Posterior cingulate gyrus (tissue), 11 donors: ENCODE measurements at regions of chr12 and their contacts with region 1.

Region 1: GRCh38 chr12:52884526-52885293 is 20.2 kb downstream of the KRT8 start:
- DNase-seq: peak; percentile 50 to 95 (median 78)

Region 2: GRCh38 chr12:52575948-52576347 is 308.8 kb before region 1 on chr12:
- intact Hi-C with region 1: no loop called
- DNase-seq: no peak

Region 3: GRCh38 chr12:52980693-52981423 is 96.1 kb after region 1 on chr12:
- intact Hi-C with region 1: loop called (anchors 2 kb)
- DNase-seq: peak; percentile 69 to 97 (median 84)

Region 4: DNA sequence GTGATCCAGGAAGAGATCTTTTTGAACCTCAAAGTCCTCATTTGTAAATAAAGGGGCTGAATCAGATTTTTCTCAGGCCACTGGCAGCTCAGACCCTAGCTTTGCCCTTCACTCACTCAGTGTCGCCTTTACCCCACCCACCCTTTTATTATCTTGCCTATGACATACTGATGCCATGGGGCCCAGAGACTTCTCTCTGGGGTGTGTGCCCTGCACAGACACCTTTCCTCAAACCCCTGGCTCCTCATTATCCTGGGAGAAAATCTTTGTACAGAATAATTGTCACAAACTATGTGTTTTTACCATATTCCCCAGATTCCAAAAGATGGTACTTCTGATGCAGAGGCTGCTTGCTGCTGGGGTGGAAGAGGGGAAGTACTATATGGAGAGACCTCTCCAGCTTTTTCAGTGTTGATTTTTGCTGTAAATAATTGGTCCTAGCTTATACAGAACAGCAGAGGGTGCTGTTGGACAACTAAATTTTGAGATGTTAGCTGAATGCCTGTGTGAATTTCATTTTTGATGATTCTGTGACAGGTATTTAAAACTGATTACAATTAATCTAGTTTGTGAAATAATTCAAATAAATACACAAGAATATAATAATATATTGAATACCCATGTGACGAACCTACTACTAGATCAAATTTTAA is 1817.4 kb after region 1 on chr12:
- intact Hi-C with region 1: no loop called
- DNase-seq: no peak